ENCODE measurements at regions of chr3 and their contacts with region 1.

Region 1: GRCh38 chr3:30199096-30199759 is 407.2 kb upstream of the TGFBR2 start:
- DNase-seq: no peak
- ATAC-seq: peak; percentile 69
- H3K4me3 ChIP-seq: no peak overlapping the region
- H3K27ac ChIP-seq: no peak overlapping the region
- H3K4me1 ChIP-seq: no peaks in the 10 kb centered on the region
- H3K27me3 ChIP-seq: no peaks in the 10 kb centered on the region; a peak in 1 of 4 replicates
- CTCF ChIP-seq: peak; percentile 63 to 78 (median 67)
- EP300 ChIP-seq: no peak
- POLR2A ChIP-seq: no peak
- RAD21 ChIP-seq: peak; percentile 88

Region 2: DNA sequence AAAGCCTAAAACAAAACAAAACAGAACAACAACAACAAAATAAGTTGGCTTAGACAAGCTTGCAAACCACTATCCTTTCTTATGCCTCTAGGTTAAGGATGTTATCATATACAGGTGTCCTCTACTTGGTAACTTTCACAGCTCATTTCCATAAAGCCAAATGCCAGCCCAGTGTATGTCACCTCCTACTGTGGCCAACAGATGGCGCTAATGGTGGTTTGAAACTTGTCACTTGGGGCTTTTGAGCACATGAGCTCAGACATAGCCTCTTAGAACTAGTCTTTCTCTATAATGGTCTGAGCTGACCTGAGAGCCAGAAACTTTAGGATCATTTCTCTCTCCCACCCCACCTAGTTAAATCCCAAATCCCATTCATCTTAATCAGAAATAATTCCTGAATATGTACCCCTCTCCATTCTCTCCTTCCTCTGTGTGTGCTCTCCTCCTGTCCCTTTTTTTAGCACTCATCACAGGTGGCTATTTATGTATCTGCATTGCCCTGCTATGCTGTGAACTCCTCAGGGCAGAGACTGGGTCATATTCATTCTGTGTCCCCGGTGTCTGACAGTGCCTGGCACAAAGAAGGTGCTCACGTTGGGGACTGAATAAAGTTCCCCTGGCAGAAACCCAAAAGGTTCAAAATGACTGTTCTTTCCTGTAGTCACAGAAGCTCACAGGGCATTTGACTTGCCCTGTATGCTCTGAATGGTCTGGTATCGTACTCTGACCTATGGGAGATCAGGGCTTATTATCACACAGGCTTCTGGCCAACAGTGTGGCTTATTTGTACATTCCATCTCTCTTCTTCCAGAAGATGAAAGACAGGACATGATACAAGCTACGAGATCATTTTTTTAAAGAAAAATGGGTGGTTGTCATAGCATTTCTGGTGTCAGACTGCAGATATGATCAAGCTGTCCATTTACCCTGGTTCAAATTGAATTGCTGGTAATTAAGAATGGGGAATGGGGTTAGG is 1531.3 kb before region 1 on chr3:
- CTCF ChIA-PET with region 1: interaction called, 41 read pairs
- POLR2A ChIA-PET with region 1: no interaction called
- RAD21 ChIA-PET with region 1: interaction called, 11 read pairs
- SMC1A ChIA-PET with region 1: interaction called, 18 read pairs
- in situ Hi-C with region 1: loop called (anchors 5 kb)
- intact Hi-C with region 1: loop called (anchors 2 kb)
- DNase-seq: peak; percentile 61
- ATAC-seq: peak; percentile 94
- H3K4me3 ChIP-seq: no peak overlapping the region
- H3K27ac ChIP-seq: no peak overlapping the region
- H3K4me1 ChIP-seq: peaks cover 6% of the 10 kb centered on the region; the same call in 1 of the 2 replicates
- H3K27me3 ChIP-seq: no peaks in the 10 kb centered on the region
- CTCF ChIP-seq: peak; percentile 66 to 81 (median 79)
- EP300 ChIP-seq: no peak
- POLR2A ChIP-seq: no peak
- RAD21 ChIP-seq: peak; percentile 65

Region 3: DNA sequence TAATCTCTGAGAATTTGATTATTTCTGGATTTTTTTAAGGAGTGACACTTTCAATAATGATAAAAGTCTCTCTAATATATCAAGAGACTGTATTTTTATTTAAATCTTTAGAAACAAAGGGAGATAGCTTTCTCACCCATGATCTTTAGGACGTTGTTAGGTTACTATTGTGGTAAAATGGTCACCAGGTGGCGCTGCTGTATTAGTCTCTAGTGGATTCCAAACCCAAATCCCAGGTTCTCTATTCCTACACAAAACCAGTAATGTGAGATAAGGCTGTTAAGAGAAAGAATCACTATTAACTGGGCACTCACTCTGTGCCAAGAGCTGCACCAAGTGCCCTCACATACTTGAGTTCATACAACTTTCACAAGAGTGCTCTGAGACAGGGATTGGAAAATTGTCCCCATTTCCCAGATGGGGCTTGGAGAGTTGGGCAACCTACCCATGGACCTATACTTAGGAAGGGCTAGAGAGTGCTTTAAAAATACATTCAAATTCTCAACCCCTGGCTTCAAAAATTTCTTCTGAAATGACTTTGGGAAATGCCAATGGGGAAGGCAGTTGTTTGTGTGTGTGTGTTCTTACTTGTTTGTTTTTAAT is 186.2 kb before region 1 on chr3:
- CTCF ChIA-PET with region 1: interaction called, 51 read pairs
- POLR2A ChIA-PET with region 1: no interaction called
- RAD21 ChIA-PET with region 1: interaction called, 34 read pairs
- SMC1A ChIA-PET with region 1: interaction called, 26 read pairs
- in situ Hi-C with region 1: no loop called
- intact Hi-C with region 1: loop called (anchors 1 kb)
- DNase-seq: peak; percentile 8
- ATAC-seq: peak; percentile 69
- H3K4me3 ChIP-seq: no peak overlapping the region
- H3K27ac ChIP-seq: no peak overlapping the region
- H3K4me1 ChIP-seq: no peaks in the 10 kb centered on the region
- H3K27me3 ChIP-seq: no peaks in the 10 kb centered on the region
- CTCF ChIP-seq: peak; percentile 48 to 61 (median 48)
- EP300 ChIP-seq: no peak
- POLR2A ChIP-seq: no peak
- RAD21 ChIP-seq: peak; percentile 54

Region 4: GRCh38 chr3:30112902-30113484 is 86.2 kb before region 1 on chr3:
- CTCF ChIA-PET with region 1: interaction called, 24 read pairs
- POLR2A ChIA-PET with region 1: no interaction called
- RAD21 ChIA-PET with region 1: interaction called, 4 read pairs
- SMC1A ChIA-PET with region 1: interaction called, 5 read pairs
- in situ Hi-C with region 1: no loop called
- intact Hi-C with region 1: loop called (anchors 2 kb)
- DNase-seq: no peak
- ATAC-seq: peak; percentile 52; the same call in 1 of the 3 replicates
- H3K4me3 ChIP-seq: no peak overlapping the region
- H3K27ac ChIP-seq: no peak overlapping the region
- H3K4me1 ChIP-seq: no peaks in the 10 kb centered on the region
- H3K27me3 ChIP-seq: no peaks in the 10 kb centered on the region
- CTCF ChIP-seq: peak; percentile 16 to 44 (median 39); a peak in 3 of 6 replicates
- EP300 ChIP-seq: no peak
- POLR2A ChIP-seq: no peak
- RAD21 ChIP-seq: peak; percentile 53

Region 5: GRCh38 chr3:30188713-30189112 is 10.5 kb before region 1 on chr3:
- CTCF ChIA-PET with region 1: interaction called, 31 read pairs
- POLR2A ChIA-PET with region 1: no interaction called
- RAD21 ChIA-PET with region 1: interaction called, 5 read pairs
- SMC1A ChIA-PET with region 1: interaction called, 7 read pairs
- in situ Hi-C with region 1: no loop called
- intact Hi-C with region 1: no loop called
- DNase-seq: no peak
- ATAC-seq: no peak
- H3K4me3 ChIP-seq: no peak overlapping the region
- H3K27ac ChIP-seq: no peak overlapping the region
- H3K4me1 ChIP-seq: no peaks in the 10 kb centered on the region
- H3K27me3 ChIP-seq: no peaks in the 10 kb centered on the region
- CTCF ChIP-seq: no peak
- EP300 ChIP-seq: no peak
- POLR2A ChIP-seq: no peak
- RAD21 ChIP-seq: no peak

Region 6: DNA sequence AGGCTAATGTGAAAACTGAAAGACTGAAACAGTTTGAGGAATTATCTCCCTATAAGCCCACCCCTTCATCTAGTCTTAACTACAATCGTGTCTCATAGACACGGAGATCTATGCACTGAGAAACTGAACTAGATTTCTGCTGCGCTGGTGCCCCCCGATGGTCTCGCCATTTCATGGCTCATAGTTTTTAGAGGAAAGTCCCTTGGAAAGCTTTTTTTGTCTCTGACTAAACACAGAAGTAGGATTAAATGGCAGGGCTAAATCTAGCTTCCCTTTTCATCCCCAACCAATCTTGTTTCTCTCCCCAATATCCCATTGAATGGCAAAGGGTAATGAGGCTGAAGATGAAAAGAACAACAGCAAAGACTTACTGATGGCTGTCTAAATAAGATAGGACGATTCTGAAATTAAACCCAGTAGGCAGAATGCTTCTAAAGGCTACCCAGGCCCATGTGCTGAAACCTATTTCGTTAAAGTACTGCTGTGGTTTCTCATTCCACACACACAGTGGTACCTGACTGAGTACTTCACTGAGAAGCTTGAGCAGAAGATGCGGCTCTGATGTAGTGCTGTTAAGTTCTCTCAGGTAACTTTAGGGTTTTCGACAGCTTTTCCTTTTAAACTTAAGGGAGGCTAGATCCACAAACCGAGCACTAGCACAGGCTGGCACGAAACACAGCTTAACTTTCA is 552.5 kb after region 1 on chr3:
- CTCF ChIA-PET with region 1: interaction called, 10 read pairs
- POLR2A ChIA-PET with region 1: no interaction called
- RAD21 ChIA-PET with region 1: no interaction called
- SMC1A ChIA-PET with region 1: no interaction called
- in situ Hi-C with region 1: no loop called
- intact Hi-C with region 1: no loop called
- DNase-seq: peak; percentile 11
- ATAC-seq: peak; percentile 78
- H3K4me3 ChIP-seq: no peak overlapping the region
- H3K27ac ChIP-seq: no peak overlapping the region
- H3K4me1 ChIP-seq: peaks cover 4% of the 10 kb centered on the region
- H3K27me3 ChIP-seq: no peaks in the 10 kb centered on the region
- CTCF ChIP-seq: peak in 2 of 3 experiments; percentile 28 to 44; a peak in 3 of 6 replicates
- EP300 ChIP-seq: no peak
- POLR2A ChIP-seq: no peak
- RAD21 ChIP-seq: peak; percentile 53